ENCODE measurements at regions of chr22 and their contacts with region 1.

Region 1: GRCh38 chr22:31872209-31872608 is 72.1 kb upstream of the YWHAH start:
- DNase-seq: peak in 1 of 2 experiments; percentile 39
- H3K4me3 ChIP-seq: no peak overlapping the region
- H3K4me3 Mint-ChIP-seq: no peak overlapping the region
- H3K27ac Mint-ChIP-seq: no peak overlapping the region
- H3K4me1 ChIP-seq: no peaks in the 10 kb centered on the region
- H3K4me1 Mint-ChIP-seq: no peaks in the 10 kb centered on the region
- H3K27me3 ChIP-seq: no peaks in the 10 kb centered on the region
- H3K27me3 Mint-ChIP-seq: no peaks in the 10 kb centered on the region
- CTCF ChIP-seq: peak in 1 of 2 experiments; percentile 49

Region 2: GRCh38 chr22:31818481-31819392 is 53.5 kb before region 1 on chr22:
- CTCF ChIA-PET with region 1: no interaction called
- POLR2A ChIA-PET with region 1: no interaction called
- intact Hi-C with region 1: no loop called
- DNase-seq: no peak
- H3K4me3 ChIP-seq: no peak overlapping the region
- H3K4me3 Mint-ChIP-seq: no peak overlapping the region
- H3K27ac Mint-ChIP-seq: no peak overlapping the region
- H3K4me1 ChIP-seq: no peaks in the 10 kb centered on the region
- H3K4me1 Mint-ChIP-seq: no peaks in the 10 kb centered on the region
- H3K27me3 ChIP-seq: no peaks in the 10 kb centered on the region
- H3K27me3 Mint-ChIP-seq: no peaks in the 10 kb centered on the region
- CTCF ChIP-seq: no peak

Region 3: GRCh38 chr22:31943976-31944699 is 71.9 kb after region 1 on chr22 and contains the start of gene YWHAH:
- CTCF ChIA-PET with region 1: interaction called, 3 read pairs
- POLR2A ChIA-PET with region 1: no interaction called
- intact Hi-C with region 1: loop called (anchors 1 kb)
- DNase-seq: peak; percentile 94 to 96
- H3K4me3 ChIP-seq: peak within 1 kb of the TSS; percentile 88
- H3K4me3 Mint-ChIP-seq: no peak within 1 kb of the TSS
- H3K27ac Mint-ChIP-seq: peak within 1 kb of the TSS; percentile 88
- H3K4me1 ChIP-seq: peaks cover 9% of the 10 kb centered on the region; the same call in 1 of the 2 replicates
- H3K4me1 Mint-ChIP-seq: no peaks in the 10 kb centered on the region
- H3K27me3 ChIP-seq: no peaks in the 10 kb centered on the region
- H3K27me3 Mint-ChIP-seq: no peaks in the 10 kb centered on the region
- CTCF ChIP-seq: no peak
- total RNA-seq, gene YWHAH: 128 and 135 TPM in 2 replicates